Caco-2 (cell line): ENCODE measurements at regions of chr4 and their contacts with region 1.

Region 1: GRCh38 chr4:147866532-147867271 is 134.8 kb downstream of the ARHGAP10 start:
- DNase-seq: peak; percentile 85 to 86
- H3K4me3 ChIP-seq: no peak overlapping the region
- H3K4me3 Mint-ChIP-seq: no peak overlapping the region
- H3K27ac Mint-ChIP-seq: no peak overlapping the region
- H3K4me1 ChIP-seq: no peaks in the 10 kb centered on the region
- H3K4me1 Mint-ChIP-seq: no peaks in the 10 kb centered on the region
- H3K27me3 ChIP-seq: no peaks in the 10 kb centered on the region
- H3K27me3 Mint-ChIP-seq: no peaks in the 10 kb centered on the region
- CTCF ChIP-seq: peak; percentile 97 to 98

Region 2: GRCh38 chr4:147518846-147519767 is 347.6 kb before region 1 on chr4:
- CTCF ChIA-PET with region 1: interaction called, 3 read pairs
- POLR2A ChIA-PET with region 1: no interaction called
- intact Hi-C with region 1: loop called (anchors 10 kb)
- DNase-seq: peak; percentile 64 to 65
- H3K4me3 ChIP-seq: no peak overlapping the region
- H3K4me3 Mint-ChIP-seq: no peak overlapping the region
- H3K27ac Mint-ChIP-seq: no peak overlapping the region
- H3K4me1 ChIP-seq: no peaks in the 10 kb centered on the region
- H3K4me1 Mint-ChIP-seq: no peaks in the 10 kb centered on the region
- H3K27me3 ChIP-seq: no peaks in the 10 kb centered on the region
- H3K27me3 Mint-ChIP-seq: no peaks in the 10 kb centered on the region
- CTCF ChIP-seq: peak; percentile 86 to 87

Region 3: GRCh38 chr4:147596981-147597380 is 269.7 kb before region 1 on chr4:
- CTCF ChIA-PET with region 1: interaction called, 10 read pairs
- POLR2A ChIA-PET with region 1: no interaction called
- intact Hi-C with region 1: loop called (anchors 1 kb)
- DNase-seq: no peak
- H3K4me3 ChIP-seq: no peak overlapping the region
- H3K4me3 Mint-ChIP-seq: no peak overlapping the region
- H3K27ac Mint-ChIP-seq: no peak overlapping the region
- H3K4me1 ChIP-seq: no peaks in the 10 kb centered on the region
- H3K4me1 Mint-ChIP-seq: no peaks in the 10 kb centered on the region
- H3K27me3 ChIP-seq: no peaks in the 10 kb centered on the region
- H3K27me3 Mint-ChIP-seq: no peaks in the 10 kb centered on the region
- CTCF ChIP-seq: no peak

Region 4: DNA sequence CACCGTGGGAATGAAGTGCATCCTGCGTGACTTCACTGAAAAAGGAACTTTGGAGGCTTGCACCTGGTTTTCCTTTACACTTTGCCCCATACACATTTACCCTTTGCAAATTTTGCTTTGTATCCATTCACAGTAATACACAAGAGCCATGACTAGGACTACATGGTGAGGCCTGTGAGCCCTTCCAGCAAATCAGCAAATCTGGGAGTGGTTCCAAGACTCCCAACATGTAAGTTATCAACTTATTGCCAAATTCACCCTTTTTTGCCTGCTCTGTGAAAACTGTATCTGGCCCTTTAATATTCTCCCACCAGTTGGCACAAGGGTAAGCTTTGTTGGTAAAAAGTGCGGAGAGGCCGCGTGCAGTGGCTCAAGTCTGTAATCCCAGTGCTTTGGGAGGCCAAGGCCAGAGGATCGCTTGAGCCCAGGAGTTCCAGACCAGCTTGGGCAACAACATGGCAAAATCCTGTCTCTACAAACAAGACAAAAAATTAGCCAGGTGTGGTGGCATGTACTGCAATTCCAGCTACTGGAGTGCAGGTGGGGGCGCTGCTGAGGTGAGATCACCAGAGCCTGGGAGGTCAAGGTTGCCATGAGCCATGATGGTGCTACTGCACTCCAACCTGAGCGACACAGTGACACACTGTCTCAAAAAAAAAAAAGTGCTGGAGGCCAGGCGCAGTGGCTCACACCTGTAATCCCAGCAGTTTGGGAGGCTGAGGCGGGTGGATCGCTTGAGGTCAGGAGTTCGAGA is 187.7 kb before region 1 on chr4:
- CTCF ChIA-PET with region 1: interaction called, 20 read pairs
- POLR2A ChIA-PET with region 1: no interaction called
- intact Hi-C with region 1: no loop called
- DNase-seq: peak; percentile 33 to 52
- H3K4me3 ChIP-seq: no peak overlapping the region
- H3K4me3 Mint-ChIP-seq: no peak overlapping the region
- H3K27ac Mint-ChIP-seq: no peak overlapping the region
- H3K4me1 ChIP-seq: peaks cover 4% of the 10 kb centered on the region
- H3K4me1 Mint-ChIP-seq: no peaks in the 10 kb centered on the region
- H3K27me3 ChIP-seq: no peaks in the 10 kb centered on the region
- H3K27me3 Mint-ChIP-seq: no peaks in the 10 kb centered on the region
- CTCF ChIP-seq: peak in 1 of 2 experiments; percentile 13

Region 5: GRCh38 chr4:147693218-147693617 is 173.5 kb before region 1 on chr4:
- CTCF ChIA-PET with region 1: interaction called, 10 read pairs
- POLR2A ChIA-PET with region 1: no interaction called
- intact Hi-C with region 1: loop called (anchors 1 kb)
- DNase-seq: no peak
- H3K4me3 ChIP-seq: no peak overlapping the region
- H3K4me3 Mint-ChIP-seq: no peak overlapping the region
- H3K27ac Mint-ChIP-seq: no peak overlapping the region
- H3K4me1 ChIP-seq: peaks cover 10% of the 10 kb centered on the region
- H3K4me1 Mint-ChIP-seq: peaks cover 13% of the 10 kb centered on the region
- H3K27me3 ChIP-seq: no peaks in the 10 kb centered on the region
- H3K27me3 Mint-ChIP-seq: no peaks in the 10 kb centered on the region
- CTCF ChIP-seq: no peak

Region 6: GRCh38 chr4:147731580-147732517 is 134.9 kb before region 1 on chr4 and contains the start of gene ARHGAP10:
- CTCF ChIA-PET with region 1: interaction called, 11 read pairs
- POLR2A ChIA-PET with region 1: no interaction called
- intact Hi-C with region 1: no loop called
- DNase-seq: peak; percentile 71 to 73
- H3K4me3 ChIP-seq: peak within 1 kb of the TSS; percentile 96
- H3K4me3 Mint-ChIP-seq: peak within 1 kb of the TSS; percentile 79
- H3K27ac Mint-ChIP-seq: peak within 1 kb of the TSS; percentile 38
- H3K4me1 ChIP-seq: peaks cover 32% of the 10 kb centered on the region
- H3K4me1 Mint-ChIP-seq: peaks cover 44% of the 10 kb centered on the region
- H3K27me3 ChIP-seq: no peaks in the 10 kb centered on the region
- H3K27me3 Mint-ChIP-seq: no peaks in the 10 kb centered on the region
- CTCF ChIP-seq: no peak
- total RNA-seq, gene ARHGAP10: 33.2 and 36.6 TPM in 2 replicates

Region 7: DNA sequence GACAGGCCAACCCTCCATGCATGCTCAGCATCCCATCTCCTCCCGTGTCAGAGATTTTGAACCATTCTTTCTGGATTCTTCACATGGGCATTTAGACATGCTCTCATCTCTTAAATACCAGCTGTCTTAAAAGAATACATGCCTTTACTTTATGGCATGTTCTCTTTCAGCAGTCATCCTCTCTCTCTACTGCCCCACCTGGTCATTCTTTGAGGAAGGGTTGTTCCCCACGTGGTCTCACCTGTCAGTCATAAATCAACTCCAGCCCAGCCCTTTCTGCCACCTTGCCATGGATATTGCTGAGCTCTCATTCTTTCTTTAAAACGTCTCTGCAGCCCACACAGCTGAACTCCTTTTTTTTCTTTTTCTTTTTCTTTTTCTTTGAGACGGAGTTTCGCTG is 23.5 kb before region 1 on chr4:
- CTCF ChIA-PET with region 1: interaction called, 11 read pairs
- POLR2A ChIA-PET with region 1: no interaction called
- intact Hi-C with region 1: no loop called
- DNase-seq: peak; percentile 57 to 66
- H3K4me3 ChIP-seq: no peak overlapping the region
- H3K4me3 Mint-ChIP-seq: no peak overlapping the region
- H3K27ac Mint-ChIP-seq: no peak overlapping the region
- H3K4me1 ChIP-seq: peaks cover 19% of the 10 kb centered on the region
- H3K4me1 Mint-ChIP-seq: peaks cover 10% of the 10 kb centered on the region
- H3K27me3 ChIP-seq: no peaks in the 10 kb centered on the region
- H3K27me3 Mint-ChIP-seq: no peaks in the 10 kb centered on the region
- CTCF ChIP-seq: peak in 1 of 2 experiments; percentile 30